Stomach (tissue), 19 donors: ENCODE measurements at regions of chr2 and their contacts with region 1.

Region 1: GRCh38 chr2:37005118-37005868 is 39.0 kb upstream of the STRN start:
- DNase-seq: peak in 1 of 2 donors; percentile 37
- H3K4me3 ChIP-seq: no peak overlapping the region
- H3K27ac ChIP-seq: no peak overlapping the region
- H3K4me1 ChIP-seq: no peaks in the 10 kb centered on the region
- H3K27me3 ChIP-seq: no peaks in the 10 kb centered on the region
- CTCF ChIP-seq: peak in 4 of 7 experiments; percentile 40 to 51 (median 42)
- EP300 ChIP-seq: no peak
- POLR2A ChIP-seq: no peak

Region 2: GRCh38 chr2:36770542-36771287 is 234.6 kb before region 1 on chr2:
- intact Hi-C with region 1: loop called (anchors 10 kb)
- DNase-seq: peak in 1 of 2 donors; percentile 37
- H3K4me3 ChIP-seq: no peak overlapping the region
- H3K27ac ChIP-seq: no peak overlapping the region
- H3K4me1 ChIP-seq: no peaks in the 10 kb centered on the region
- H3K27me3 ChIP-seq: no peaks in the 10 kb centered on the region
- CTCF ChIP-seq: peak in 1 of 7 experiments; percentile 25
- EP300 ChIP-seq: no peak
- POLR2A ChIP-seq: no peak

Region 3: DNA sequence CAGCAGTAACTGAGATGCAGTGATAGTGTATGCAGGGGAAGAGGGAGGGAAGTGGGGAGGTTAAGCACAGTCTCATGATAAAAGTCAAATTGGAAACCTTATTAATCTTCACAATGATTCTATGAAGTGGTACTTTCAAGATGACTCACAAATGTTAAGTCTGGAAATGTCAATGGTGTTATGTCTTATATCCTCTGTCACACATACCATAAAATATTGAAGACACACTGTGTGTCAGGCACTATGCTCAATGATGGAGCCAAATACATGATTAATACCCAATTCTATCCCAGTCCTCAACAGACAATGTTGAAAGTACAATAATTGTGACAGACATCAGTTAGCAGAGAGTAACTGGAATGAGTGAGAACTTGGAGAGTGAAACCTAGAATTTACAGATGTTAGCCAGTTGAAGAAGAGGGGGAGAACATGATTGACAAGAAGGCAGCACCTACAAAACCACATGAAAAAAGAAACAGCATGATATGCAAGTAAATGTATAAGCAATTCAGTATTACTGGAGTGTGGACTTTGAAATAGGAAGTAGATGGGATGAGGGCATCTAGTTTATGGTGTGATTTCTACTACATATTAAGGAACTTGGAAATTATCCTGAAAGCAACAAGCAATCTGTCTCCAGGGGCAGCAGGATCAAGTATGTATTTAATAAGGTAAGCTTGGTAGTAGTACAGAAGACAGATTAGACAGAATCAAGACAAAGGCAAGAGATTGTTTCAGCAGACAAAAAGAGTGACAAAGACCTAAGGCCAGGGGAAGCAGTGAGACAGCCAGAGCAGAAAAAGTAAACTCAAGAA is 146.5 kb before region 1 on chr2:
- intact Hi-C with region 1: no loop called
- DNase-seq: peak in 1 of 2 donors; percentile 9
- H3K4me3 ChIP-seq: no peak overlapping the region
- H3K27ac ChIP-seq: no peak overlapping the region
- H3K4me1 ChIP-seq: no peaks in the 10 kb centered on the region
- H3K27me3 ChIP-seq: no peaks in the 10 kb centered on the region
- CTCF ChIP-seq: no peak
- EP300 ChIP-seq: no peak
- POLR2A ChIP-seq: no peak

Region 4: GRCh38 chr2:36941867-36942266 is 63.4 kb before region 1 on chr2:
- intact Hi-C with region 1: no loop called
- DNase-seq: no peak
- H3K4me3 ChIP-seq: no peak overlapping the region
- H3K27ac ChIP-seq: no peak overlapping the region
- H3K4me1 ChIP-seq: no peaks in the 10 kb centered on the region
- H3K27me3 ChIP-seq: no peaks in the 10 kb centered on the region
- CTCF ChIP-seq: no peak
- EP300 ChIP-seq: no peak
- POLR2A ChIP-seq: no peak